HEK293 (cell line): ENCODE measurements at regions of chr6 and their contacts with region 1.

Region 1: GRCh38 chr6:159633196-159633595 is 59.8 kb downstream of the SOD2 start:
- H3K4me3 ChIP-seq: no peak overlapping the region
- H3K27ac ChIP-seq: no peak overlapping the region
- H3K4me1 ChIP-seq: no peaks in the 10 kb centered on the region
- CTCF ChIP-seq: no peak

Region 2: DNA sequence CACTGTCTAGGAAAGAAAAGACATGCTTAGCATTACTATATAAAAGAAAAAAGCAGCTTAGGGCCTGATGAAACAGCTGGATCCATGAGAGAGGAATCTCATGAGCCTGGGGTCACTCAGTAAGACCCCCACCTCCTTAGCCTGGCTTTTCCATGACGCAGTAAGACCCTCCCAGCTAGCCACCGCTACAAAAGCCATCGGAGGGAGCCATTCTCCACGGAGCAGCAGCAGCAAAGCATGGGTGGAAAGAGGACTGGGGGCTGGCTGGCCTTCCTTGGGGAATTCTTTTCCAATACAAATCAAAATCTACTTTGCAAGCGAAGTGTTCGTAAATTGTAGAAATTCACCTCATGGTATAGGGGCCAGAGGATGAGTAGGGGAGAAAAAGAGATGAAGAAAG is 32.0 kb before region 1 on chr6:
- CTCF ChIA-PET with region 1: no interaction called
- POLR2A ChIA-PET with region 1: no interaction called
- H3K4me3 ChIP-seq: no peak overlapping the region
- H3K27ac ChIP-seq: no peak overlapping the region
- H3K4me1 ChIP-seq: no peaks in the 10 kb centered on the region
- CTCF ChIP-seq: no peak

Region 3: GRCh38 chr6:159620947-159621346 is 12.2 kb before region 1 on chr6:
- CTCF ChIA-PET with region 1: interaction called, 28 read pairs
- POLR2A ChIA-PET with region 1: no interaction called
- H3K4me3 ChIP-seq: no peak overlapping the region
- H3K27ac ChIP-seq: no peak overlapping the region
- H3K4me1 ChIP-seq: no peaks in the 10 kb centered on the region
- CTCF ChIP-seq: no peak

Region 4: GRCh38 chr6:159679091-159680077 is 46.2 kb after region 1 on chr6:
- CTCF ChIA-PET with region 1: no interaction called
- POLR2A ChIA-PET with region 1: no interaction called
- H3K4me3 ChIP-seq: no peak overlapping the region
- H3K27ac ChIP-seq: no peak overlapping the region
- H3K4me1 ChIP-seq: no peaks in the 10 kb centered on the region
- CTCF ChIP-seq: no peak